ENCODE measurements at regions of chr15 and their contacts with region 1.

Region 1: DNA sequence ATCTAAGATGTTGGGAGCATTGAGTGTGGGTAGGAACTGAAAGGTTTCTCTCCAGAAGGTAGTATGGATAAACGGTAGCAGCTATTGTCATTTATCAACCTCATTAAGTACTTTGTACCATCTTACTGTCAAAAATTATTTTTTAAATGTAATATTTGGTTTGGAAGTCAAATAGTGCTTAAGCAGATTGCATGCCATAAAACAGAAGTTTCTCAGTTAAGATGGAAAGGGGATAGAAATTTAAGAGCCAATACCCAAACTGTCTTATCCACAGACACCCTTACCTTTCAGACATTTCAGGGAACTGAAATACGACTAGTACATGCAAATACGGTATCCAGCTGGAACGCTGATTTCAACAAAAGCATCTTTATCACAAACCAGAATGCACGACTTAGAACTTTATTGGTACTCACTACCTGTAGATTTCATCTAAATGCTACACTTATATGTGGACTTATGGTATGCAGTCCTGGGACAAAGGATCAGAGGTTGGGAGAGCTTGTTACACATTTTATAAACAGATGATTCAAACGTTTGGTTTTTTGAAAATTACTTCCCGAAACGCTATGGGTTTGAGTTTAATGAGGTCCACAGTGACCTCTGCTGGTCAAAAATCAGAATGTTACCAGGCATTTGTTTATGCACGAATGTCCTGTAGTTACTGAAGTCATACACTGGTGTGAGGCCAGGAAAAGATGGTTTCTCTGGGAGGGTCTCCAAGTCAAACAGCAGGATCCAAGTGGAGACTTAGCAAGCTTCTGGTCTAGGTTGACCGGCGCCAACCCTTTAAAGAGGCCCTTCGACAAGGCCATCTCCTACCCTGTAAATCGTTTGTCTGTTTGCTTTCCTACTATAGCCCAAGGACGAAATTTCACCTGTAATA is 45.7 kb upstream of the DUT start:
- DNase-seq: peak; percentile 62
- H3K4me3 ChIP-seq: no peak overlapping the region
- H3K27ac ChIP-seq: no peak overlapping the region
- H3K4me1 ChIP-seq: peaks cover 0 to 11% (median 2%) of the 10 kb centered on the region in 4 donors
- H3K27me3 ChIP-seq: no peaks in the 10 kb centered on the region
- CTCF ChIP-seq: peak; percentile 64 to 78 (median 74)
- EP300 ChIP-seq: no peak
- POLR2A ChIP-seq: no peak

Region 2: GRCh38 chr15:46312133-46312740 is 1973.3 kb before region 1 on chr15:
- in situ Hi-C with region 1: loop called in 1 of 4 experiments (anchors 25 kb)
- intact Hi-C with region 1: no loop called
- DNase-seq: peak; percentile 84
- H3K4me3 ChIP-seq: no peak overlapping the region
- H3K27ac ChIP-seq: no peak overlapping the region
- H3K4me1 ChIP-seq: no peaks in the 10 kb centered on the region
- H3K27me3 ChIP-seq: no peaks in the 10 kb centered on the region
- CTCF ChIP-seq: peak; percentile 80 to 86 (median 82)
- EP300 ChIP-seq: no peak
- POLR2A ChIP-seq: no peak

Region 3: DNA sequence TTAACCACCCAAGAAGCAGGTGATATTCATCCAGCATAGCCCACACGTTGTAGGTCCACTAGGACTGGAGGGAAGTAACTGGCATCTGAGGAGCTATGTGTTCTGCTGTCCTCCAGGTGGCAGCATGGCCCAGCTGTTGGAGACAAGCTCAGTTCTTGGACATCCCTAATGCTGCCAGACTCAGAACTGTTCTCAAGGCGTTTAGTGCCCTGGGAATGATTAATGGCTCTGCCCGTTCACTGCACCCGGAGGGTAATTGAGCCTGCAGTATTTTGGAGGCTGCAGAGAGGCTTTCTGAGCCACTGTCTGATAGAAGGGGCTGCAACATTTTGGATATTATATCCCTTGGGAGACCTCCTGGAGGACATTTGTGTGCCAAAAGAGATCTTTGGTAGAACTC is 1089.5 kb before region 1 on chr15:
- in situ Hi-C with region 1: loop called in 1 of 4 experiments (anchors 25 kb)
- intact Hi-C with region 1: no loop called
- DNase-seq: peak; percentile 75
- H3K4me3 ChIP-seq: no peak overlapping the region
- H3K27ac ChIP-seq: no peak overlapping the region
- H3K4me1 ChIP-seq: peaks cover 0 to 3% (median 0%) of the 10 kb centered on the region in 4 donors
- H3K27me3 ChIP-seq: no peaks in the 10 kb centered on the region
- CTCF ChIP-seq: peak; percentile 68 to 80 (median 73)
- EP300 ChIP-seq: no peak
- POLR2A ChIP-seq: no peak

Region 4: DNA sequence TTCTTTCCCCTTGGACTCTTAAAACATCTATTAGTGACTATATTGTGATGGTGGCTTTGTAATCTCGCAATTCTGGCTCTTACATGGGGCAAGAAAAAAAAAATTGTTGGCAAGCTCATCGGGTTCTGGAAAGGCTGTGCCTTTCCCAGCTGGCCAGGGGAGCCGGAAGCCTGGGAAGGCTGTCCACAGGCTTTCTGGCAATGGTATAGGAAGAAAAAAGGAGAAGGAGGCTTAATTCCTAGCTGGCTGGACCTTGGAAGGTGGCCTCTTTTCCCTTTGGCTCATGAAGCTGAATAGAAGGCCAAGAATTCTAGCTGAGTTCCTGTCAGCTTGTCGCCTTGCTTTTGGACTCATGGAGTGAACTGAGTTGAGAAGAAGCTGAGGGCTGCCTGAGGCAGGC is 811.7 kb before region 1 on chr15:
- in situ Hi-C with region 1: loop called in 1 of 4 experiments (anchors 25 kb)
- intact Hi-C with region 1: no loop called
- DNase-seq: peak; percentile 7
- H3K4me3 ChIP-seq: no peak overlapping the region
- H3K27ac ChIP-seq: no peak overlapping the region
- H3K4me1 ChIP-seq: no peaks in the 10 kb centered on the region
- H3K27me3 ChIP-seq: no peaks in the 10 kb centered on the region
- CTCF ChIP-seq: no peak
- EP300 ChIP-seq: no peak
- POLR2A ChIP-seq: no peak

Measured in transverse colon (tissue), 4 donors.